ENCODE measurements at regions of chr1 and their contacts with region 1.

Region 1: DNA sequence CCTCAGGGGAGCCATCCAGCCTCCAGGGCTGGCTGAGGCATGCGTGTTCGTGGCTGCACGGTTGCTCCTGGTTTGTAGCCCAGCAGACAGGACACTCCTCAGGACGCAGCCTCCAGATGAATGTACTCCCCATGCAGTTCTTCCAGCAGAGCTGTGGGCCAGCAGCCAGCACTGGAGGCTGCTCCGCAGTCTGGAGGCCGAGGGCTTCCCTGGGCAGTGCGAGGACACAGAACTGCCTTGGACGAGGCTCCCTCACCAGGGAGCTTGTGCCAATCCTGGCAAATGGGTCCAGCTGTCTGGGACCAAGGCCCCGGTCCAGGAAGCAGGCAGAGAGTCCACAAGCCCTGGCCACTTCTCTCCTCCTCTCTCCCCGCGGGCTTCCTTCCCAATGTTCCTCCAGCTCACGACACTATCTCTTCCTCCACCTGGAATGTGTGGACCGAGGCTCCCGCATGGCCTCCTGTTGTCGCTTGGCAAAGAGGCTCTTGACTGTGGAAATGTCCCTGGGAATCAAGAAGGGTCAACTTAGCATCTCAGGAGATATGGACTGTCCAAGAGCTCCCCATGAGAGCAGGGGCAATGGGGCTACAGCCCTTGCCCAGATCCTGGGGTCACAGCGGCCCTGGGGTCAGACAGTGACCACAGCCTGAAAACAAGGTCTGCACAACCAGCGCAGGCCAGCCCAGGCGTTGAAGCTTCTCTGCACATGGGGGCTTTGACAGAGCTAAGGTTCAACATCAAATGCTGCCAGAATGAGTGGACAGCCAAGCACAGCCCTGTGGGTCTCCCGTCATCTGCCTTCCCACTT is 5.3 kb downstream of the EDN2 start:
- DNase-seq: no peak
- H3K4me3 ChIP-seq: no peak overlapping the region
- H3K27ac ChIP-seq: no peak overlapping the region
- H3K4me1 ChIP-seq: peaks cover 9 to 53% of the 10 kb centered on the region in 2 donors
- H3K27me3 ChIP-seq: no peaks in the 10 kb centered on the region
- CTCF ChIP-seq: no peak
- POLR2A ChIP-seq: no peak

Region 2: GRCh38 chr1:41432481-41433280 is 46.5 kb before region 1 on chr1:
- intact Hi-C with region 1: no loop called
- DNase-seq: peak; percentile 74 to 88
- H3K4me3 ChIP-seq: peak overlapping the region in 1 of 3 donors; percentile 4
- H3K27ac ChIP-seq: peak overlapping the region; percentile 38 to 76
- H3K4me1 ChIP-seq: peaks cover 8 to 13% of the 10 kb centered on the region in 2 donors
- H3K27me3 ChIP-seq: no peaks in the 10 kb centered on the region
- CTCF ChIP-seq: peak; percentile 84 to 89 (median 85)
- POLR2A ChIP-seq: no peak

Region 3: GRCh38 chr1:41454406-41455122 is 24.6 kb before region 1 on chr1:
- intact Hi-C with region 1: loop called (anchors 1 kb)
- DNase-seq: peak in 1 of 2 donors; percentile 92
- H3K4me3 ChIP-seq: no peak overlapping the region
- H3K27ac ChIP-seq: peak overlapping the region; percentile 27 to 70
- H3K4me1 ChIP-seq: peaks cover 5 to 17% of the 10 kb centered on the region in 2 donors
- H3K27me3 ChIP-seq: no peaks in the 10 kb centered on the region
- CTCF ChIP-seq: no peak
- POLR2A ChIP-seq: no peak

Region 4: DNA sequence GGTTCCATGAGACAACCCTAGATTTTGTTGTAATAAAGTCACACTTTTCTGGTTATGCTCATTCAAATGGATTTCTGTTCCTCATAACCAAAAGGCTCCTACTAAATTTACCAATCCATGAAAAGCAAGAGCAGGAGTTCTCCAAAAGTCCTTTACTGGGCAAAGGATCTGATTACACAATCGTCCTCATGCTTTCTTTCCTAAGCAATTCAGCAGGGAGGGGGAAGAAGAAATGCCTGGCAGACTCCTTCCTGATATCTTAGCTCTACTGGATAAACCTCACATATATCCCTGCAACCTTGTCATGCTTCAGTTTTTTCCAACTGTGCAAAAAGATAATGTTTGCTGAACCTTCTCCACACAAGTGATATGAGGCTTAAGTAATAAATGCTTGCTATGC is 606.4 kb after region 1 on chr1:
- intact Hi-C with region 1: no loop called
- DNase-seq: no peak
- H3K4me3 ChIP-seq: no peak overlapping the region
- H3K27ac ChIP-seq: no peak overlapping the region
- H3K4me1 ChIP-seq: no peaks in the 10 kb centered on the region
- H3K27me3 ChIP-seq: no peaks in the 10 kb centered on the region
- CTCF ChIP-seq: no peak
- POLR2A ChIP-seq: no peak